HAP-1 (cell line): ENCODE measurements at regions of chrX and their contacts with region 1.

Region 1: GRCh38 chrX:132615391-132616131 is 126.7 kb upstream of the MBNL3 start:
- DNase-seq: peak; percentile 38 to 83
- H3K4me3 ChIP-seq: no peak overlapping the region
- H3K4me1 ChIP-seq: no peaks in the 10 kb centered on the region
- H3K27me3 ChIP-seq: no peaks in the 10 kb centered on the region

Region 2: DNA sequence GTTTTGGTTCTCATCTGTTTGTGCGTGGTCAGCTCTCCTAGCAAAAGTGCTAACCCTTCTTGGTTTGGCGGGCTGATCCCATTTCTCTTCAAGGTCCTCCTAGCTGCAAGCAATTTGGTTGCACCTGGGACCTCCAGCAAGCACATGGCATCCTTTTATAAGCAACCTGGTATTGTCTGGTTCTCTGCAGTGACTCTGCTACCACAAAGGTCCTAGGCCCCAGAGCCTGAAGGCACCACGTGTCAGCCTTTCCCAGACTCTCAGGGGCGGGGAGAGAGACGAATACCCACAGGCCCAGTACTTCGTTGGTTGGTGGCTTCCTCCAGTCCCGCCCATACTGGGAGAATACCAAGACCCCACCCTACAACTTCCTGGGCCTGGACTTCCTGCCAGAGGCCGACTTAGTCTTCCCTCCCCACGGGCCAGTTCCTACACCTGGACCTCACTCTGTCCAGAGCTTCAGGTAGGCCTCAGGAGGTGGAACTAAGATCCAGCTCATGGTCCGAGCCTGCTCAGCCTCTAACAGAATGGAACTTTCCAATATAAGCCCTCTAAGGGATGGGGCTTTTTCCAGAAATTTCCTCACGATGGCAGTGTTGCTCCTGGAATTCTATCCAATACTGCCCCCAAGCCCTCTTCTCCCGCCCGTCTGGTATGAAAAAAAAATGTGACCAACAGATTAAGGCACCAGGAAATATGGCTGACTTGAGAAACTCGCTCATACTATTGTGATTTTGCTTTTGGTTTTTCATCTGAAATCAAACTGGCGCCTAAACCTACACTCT is 785.0 kb before region 1 on chrX:
- in situ Hi-C with region 1: loop called (anchors 25 kb)
- DNase-seq: peak; percentile 96 to 98
- H3K4me3 ChIP-seq: peak overlapping the region; percentile 36
- H3K4me1 ChIP-seq: peaks cover 35% of the 10 kb centered on the region
- H3K27me3 ChIP-seq: no peaks in the 10 kb centered on the region

Region 3: DNA sequence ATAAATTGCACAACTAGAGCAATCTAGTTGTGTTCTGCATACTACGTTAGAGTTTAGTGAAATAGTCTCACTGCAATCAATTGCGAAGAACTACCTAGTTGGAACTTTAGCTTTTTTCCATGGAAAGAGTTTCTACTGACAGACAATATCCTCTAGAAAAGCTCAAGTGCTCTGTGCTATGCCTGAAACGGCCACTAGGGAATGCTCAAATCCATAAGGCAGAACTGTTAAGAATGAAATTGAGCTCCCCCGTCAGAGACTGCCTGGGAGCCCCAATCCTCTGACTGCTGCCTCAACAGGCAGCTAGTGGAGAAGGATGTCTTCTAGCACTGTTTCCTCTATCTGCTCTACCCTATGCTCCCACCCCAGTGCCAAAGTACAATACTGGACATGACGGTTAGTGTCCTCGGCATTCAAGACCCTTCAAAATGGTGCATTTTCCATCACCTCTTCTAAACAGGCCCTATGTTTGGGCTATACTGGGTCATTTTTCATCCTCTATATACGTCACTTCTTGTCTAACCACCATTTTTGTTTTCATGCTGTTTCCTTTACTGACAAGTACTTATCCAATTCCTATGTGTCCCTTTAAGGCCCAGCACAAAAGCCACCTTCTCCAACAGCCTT is 523.0 kb before region 1 on chrX:
- in situ Hi-C with region 1: loop called (anchors 25 kb)
- DNase-seq: peak; percentile 70 to 78
- H3K4me3 ChIP-seq: no peak overlapping the region
- H3K4me1 ChIP-seq: no peaks in the 10 kb centered on the region
- H3K27me3 ChIP-seq: peaks cover 5% of the 10 kb centered on the region; the same call in 1 of the 2 replicates

Region 4: GRCh38 chrX:132292793-132293192 is 322.8 kb before region 1 on chrX:
- in situ Hi-C with region 1: loop called (anchors 5 kb)
- DNase-seq: peak; percentile 62 to 66
- H3K4me3 ChIP-seq: no peak overlapping the region
- H3K4me1 ChIP-seq: no peaks in the 10 kb centered on the region
- H3K27me3 ChIP-seq: no peaks in the 10 kb centered on the region

Region 5: GRCh38 chrX:132389480-132389879 is 226.1 kb before region 1 on chrX:
- in situ Hi-C with region 1: no loop called
- DNase-seq: no peak
- H3K4me3 ChIP-seq: no peak overlapping the region
- H3K4me1 ChIP-seq: peaks cover 18% of the 10 kb centered on the region
- H3K27me3 ChIP-seq: no peaks in the 10 kb centered on the region

Region 6: GRCh38 chrX:132671229-132671641 is 55.7 kb after region 1 on chrX:
- in situ Hi-C with region 1: no loop called
- DNase-seq: no peak
- H3K4me3 ChIP-seq: no peak overlapping the region
- H3K4me1 ChIP-seq: no peaks in the 10 kb centered on the region
- H3K27me3 ChIP-seq: no peaks in the 10 kb centered on the region

Region 7: GRCh38 chrX:132853040-132853439 is 237.5 kb after region 1 on chrX:
- in situ Hi-C with region 1: no loop called
- DNase-seq: no peak
- H3K4me3 ChIP-seq: no peak overlapping the region
- H3K4me1 ChIP-seq: peaks cover 21% of the 10 kb centered on the region
- H3K27me3 ChIP-seq: no peaks in the 10 kb centered on the region